Activated CD8-positive, alpha-beta T cell treated with anti-CD3 and anti-CD28 coated beads for 36 hours (primary cell): ENCODE measurements at regions of chr11 and their contacts with region 1.

Region 1: GRCh38 chr11:122853971-122854446 is 15.7 kb downstream of the CRTAM start:
- DNase-seq: peak; percentile 64
- ATAC-seq: no peak
- H3K4me3 Mint-ChIP-seq: no peak overlapping the region
- H3K27ac Mint-ChIP-seq: no peak overlapping the region
- H3K4me1 Mint-ChIP-seq: peaks cover 66% of the 10 kb centered on the region
- H3K27me3 Mint-ChIP-seq: no peaks in the 10 kb centered on the region
- CTCF ChIP-seq: peak; percentile 95

Region 2: DNA sequence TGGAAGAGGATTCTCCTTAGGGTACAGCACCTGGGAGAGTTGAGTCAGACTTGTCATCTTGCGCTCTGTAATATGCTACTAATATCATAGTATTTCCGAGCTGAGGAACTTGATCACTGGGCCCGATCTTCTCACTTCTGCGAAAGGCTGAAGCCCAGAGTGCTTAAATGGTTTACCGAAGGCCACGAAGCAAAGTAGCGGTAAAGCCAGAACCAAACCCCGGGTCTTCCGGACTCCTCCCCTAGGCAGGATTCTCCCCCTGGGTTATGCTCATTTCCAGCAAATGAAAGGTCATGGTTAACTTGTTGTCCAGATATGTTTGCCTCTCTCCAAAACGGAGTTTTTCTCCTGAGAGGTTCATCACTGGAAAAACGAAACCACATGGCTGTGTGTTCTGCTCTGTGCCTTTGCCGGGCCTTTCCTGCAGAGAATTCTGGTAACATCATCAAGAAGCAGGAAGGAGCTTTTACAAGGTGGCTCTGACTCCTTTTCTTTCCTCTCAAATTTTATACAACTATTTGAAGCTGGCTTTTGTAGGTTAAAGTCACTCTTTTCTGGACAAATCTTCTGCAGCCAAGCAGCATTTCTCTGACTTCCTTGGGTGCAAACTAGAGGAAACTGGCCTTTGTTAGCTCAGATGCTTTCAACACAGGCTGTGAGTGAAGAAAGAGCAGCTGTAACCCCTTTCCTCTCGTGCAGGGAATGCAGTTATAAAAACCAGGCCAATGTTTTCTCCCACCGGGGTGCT is 163.0 kb before region 1 on chr11:
- CTCF ChIA-PET with region 1: interaction called, 10 read pairs
- POLR2A ChIA-PET with region 1: interaction called, 3 read pairs
- intact Hi-C with region 1: loop called (anchors 10 kb)
- DNase-seq: no peak
- ATAC-seq: peak; percentile 17
- H3K4me3 Mint-ChIP-seq: peak overlapping the region; percentile 65
- H3K27ac Mint-ChIP-seq: peak overlapping the region; percentile 66
- H3K4me1 Mint-ChIP-seq: peaks cover 80% of the 10 kb centered on the region
- H3K27me3 Mint-ChIP-seq: no peaks in the 10 kb centered on the region
- CTCF ChIP-seq: no peak

Region 3: DNA sequence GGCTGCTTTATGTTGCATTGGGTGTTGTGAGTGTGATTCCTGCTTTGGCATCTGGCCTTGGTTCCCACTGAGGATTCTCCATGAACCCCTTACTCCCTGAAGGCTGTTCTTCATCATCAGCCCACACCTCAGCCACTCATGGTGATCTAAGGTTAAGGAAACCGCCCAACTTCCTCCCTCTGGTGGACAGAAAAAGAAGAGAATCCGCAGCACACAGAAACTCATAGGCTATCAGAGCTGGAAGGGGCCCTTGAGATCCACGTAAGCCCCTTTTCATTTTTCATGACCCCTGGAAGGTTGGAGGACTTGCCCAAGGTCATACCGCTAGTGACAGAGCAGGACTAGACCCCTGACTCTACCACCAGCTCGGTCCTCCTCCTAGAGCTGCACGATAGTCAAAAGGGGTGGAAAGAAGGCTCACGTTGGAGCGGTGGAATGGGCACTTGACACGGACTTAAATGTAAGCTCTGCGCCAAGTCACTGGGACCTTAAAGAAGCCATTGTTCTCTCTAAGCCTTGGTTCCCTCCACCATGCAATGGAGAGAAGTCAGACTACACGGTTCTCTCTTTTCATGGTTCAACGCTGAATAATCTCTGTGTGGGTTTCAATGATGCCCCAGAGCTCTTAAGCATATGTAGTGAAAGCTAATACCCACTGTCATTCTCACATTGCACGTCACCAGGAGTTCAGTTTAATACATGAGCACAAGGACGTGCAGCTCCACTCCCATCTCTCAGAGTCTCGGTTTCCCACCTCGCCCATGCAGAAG is 99.3 kb before region 1 on chr11:
- CTCF ChIA-PET with region 1: interaction called, 13 read pairs
- POLR2A ChIA-PET with region 1: interaction called, 4 read pairs
- intact Hi-C with region 1: loop called (anchors 5 kb)
- DNase-seq: peak; percentile 63
- ATAC-seq: peak; percentile 40
- H3K4me3 Mint-ChIP-seq: no peak overlapping the region
- H3K27ac Mint-ChIP-seq: no peak overlapping the region
- H3K4me1 Mint-ChIP-seq: peaks cover 70% of the 10 kb centered on the region
- H3K27me3 Mint-ChIP-seq: no peaks in the 10 kb centered on the region
- CTCF ChIP-seq: peak; percentile 60

Region 4: DNA sequence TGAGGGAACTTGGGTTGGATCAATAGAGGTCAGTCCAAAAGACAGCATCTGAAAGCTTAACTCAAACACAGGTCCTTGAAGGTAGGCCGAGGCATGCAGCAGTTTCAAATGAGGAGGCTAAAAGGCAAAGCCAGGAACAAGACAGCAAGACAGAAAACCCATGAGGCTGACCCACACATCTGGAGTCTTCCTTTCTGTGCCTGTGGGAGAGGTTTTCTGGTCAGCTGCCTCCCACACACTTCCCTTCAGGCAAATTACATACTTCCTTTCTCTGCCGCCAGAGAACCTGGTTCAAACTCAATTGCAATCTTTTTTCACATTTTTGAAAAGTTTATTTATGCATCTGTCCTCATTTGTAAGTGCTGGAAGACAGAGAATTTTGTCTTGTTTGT is 45.5 kb before region 1 on chr11:
- CTCF ChIA-PET with region 1: interaction called, 108 read pairs
- POLR2A ChIA-PET with region 1: interaction called, 5 read pairs
- intact Hi-C with region 1: loop called (anchors 5 kb)
- DNase-seq: peak; percentile 56
- ATAC-seq: peak; percentile 49
- H3K4me3 Mint-ChIP-seq: peak overlapping the region; percentile 55
- H3K27ac Mint-ChIP-seq: peak overlapping the region; percentile 76
- H3K4me1 Mint-ChIP-seq: peaks cover 65% of the 10 kb centered on the region
- H3K27me3 Mint-ChIP-seq: no peaks in the 10 kb centered on the region
- CTCF ChIP-seq: no peak

Region 5: DNA sequence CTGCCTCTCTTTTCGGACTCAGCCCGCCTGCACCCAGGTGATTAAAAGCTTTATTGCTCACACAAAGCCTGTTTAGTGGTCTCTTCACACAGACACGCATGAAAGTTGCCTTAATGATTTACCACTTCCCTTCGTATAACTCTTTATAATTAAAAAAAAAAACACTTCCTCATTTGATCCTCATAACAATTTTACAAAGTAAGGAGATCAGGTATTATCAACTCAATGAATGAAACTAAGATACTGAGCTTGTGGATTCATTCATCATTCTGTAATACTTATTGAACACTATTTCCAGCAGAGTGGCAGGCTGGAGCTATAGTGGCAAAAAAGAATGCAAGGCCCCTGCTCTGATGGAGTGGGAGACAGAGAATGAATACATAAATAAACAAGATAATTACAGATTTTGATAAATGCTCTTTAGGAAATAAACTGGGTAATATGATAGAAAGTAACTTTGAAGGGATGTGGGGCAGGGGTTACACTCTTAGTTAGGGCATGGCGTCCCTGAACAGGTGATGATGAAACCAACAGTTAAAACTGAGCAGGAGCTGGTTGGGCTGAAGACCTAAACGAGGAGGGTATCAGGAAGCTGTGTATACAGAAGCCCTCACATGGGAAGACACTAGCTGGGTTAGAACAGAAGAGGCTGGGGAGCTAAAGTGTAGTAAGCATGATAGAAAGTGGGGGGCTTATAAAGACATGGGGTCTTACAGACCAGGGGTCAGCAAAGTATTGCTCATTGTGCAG is 21.1 kb before region 1 on chr11:
- CTCF ChIA-PET with region 1: interaction called, 80 read pairs
- POLR2A ChIA-PET with region 1: interaction called, 61 read pairs
- intact Hi-C with region 1: no loop called
- DNase-seq: no peak
- ATAC-seq: peak; percentile 54
- H3K4me3 Mint-ChIP-seq: peak overlapping the region; percentile 7
- H3K27ac Mint-ChIP-seq: peak overlapping the region; percentile 65
- H3K4me1 Mint-ChIP-seq: peaks cover 45% of the 10 kb centered on the region
- H3K27me3 Mint-ChIP-seq: no peaks in the 10 kb centered on the region
- CTCF ChIP-seq: no peak

Region 6: DNA sequence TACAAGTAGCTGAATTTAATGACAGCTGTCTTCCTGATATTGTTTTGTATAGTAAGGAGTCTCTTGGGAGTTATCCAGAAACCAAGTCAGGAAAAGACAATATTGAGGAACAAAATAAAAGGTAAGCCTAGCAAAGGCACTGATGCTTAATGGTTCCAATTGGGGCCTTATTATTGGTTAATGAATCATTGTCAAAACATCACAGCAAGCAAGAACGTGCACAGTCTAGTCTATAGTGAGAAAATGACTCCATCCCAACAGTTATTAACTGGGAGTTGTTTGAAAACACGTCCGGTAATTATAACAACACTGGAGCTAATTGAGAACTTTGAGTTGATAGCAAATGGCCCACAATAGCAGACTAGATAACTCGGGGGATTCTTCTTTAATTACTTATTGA is 110.0 kb after region 1 on chr11:
- CTCF ChIA-PET with region 1: no interaction called
- POLR2A ChIA-PET with region 1: no interaction called
- intact Hi-C with region 1: no loop called
- DNase-seq: no peak
- ATAC-seq: no peak
- H3K4me3 Mint-ChIP-seq: no peak overlapping the region
- H3K27ac Mint-ChIP-seq: no peak overlapping the region
- H3K4me1 Mint-ChIP-seq: no peaks in the 10 kb centered on the region
- H3K27me3 Mint-ChIP-seq: peaks cover 21% of the 10 kb centered on the region
- CTCF ChIP-seq: no peak

Region 7: DNA sequence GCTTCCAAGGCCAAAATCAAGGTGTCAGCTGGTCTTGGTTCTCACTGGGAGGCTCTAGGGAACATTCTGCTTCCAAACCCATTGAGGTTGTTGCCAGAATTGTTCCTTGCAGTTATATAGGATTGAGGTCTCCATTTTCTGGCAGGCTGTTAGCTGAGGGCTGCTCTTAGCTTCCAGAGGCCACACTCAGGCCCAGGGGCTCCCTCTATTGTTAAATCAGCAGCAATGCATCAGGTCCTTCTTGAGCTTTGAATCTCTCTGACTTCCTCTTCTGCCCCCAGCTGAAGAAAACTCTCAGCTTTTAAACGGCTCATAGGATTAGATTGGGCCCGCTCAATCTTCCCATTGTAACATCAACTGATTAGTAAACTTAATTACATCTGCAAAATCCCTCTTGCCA is 167.0 kb after region 1 on chr11:
- CTCF ChIA-PET with region 1: interaction called, 19 read pairs
- POLR2A ChIA-PET with region 1: interaction called, 4 read pairs
- intact Hi-C with region 1: no loop called
- DNase-seq: peak; percentile 52
- ATAC-seq: peak; percentile 86
- H3K4me3 Mint-ChIP-seq: no peak overlapping the region
- H3K27ac Mint-ChIP-seq: no peak overlapping the region
- H3K4me1 Mint-ChIP-seq: peaks cover 8% of the 10 kb centered on the region
- H3K27me3 Mint-ChIP-seq: peaks cover 3% of the 10 kb centered on the region
- CTCF ChIP-seq: peak; percentile 61